ENCODE measurements at regions of chr17 and their contacts with region 1.

Region 1: GRCh38 chr17:55421179-55421934 is at the start of gene MMD:
- DNase-seq: peak; percentile 17
- H3K4me3 ChIP-seq: peak within 1 kb of the TSS; percentile 99
- H3K27ac ChIP-seq: peak within 1 kb of the TSS; percentile 86
- H3K4me1 ChIP-seq: peaks cover 83% of the 10 kb centered on the region
- CTCF ChIP-seq: no peak
- total RNA-seq, gene MMD: 41.4 and 42.7 TPM in 2 replicates

Region 2: GRCh38 chr17:54968262-54968987 is 452.9 kb before region 1 on chr17 and contains the starts of genes COX11 and STXBP4:
- CTCF ChIA-PET with region 1: no interaction called
- POLR2A ChIA-PET with region 1: no interaction called
- intact Hi-C with region 1: loop called (anchors 5 kb)
- DNase-seq: peak; percentile 98
- H3K4me3 ChIP-seq: peak within 1 kb of the TSS; percentile 93
- H3K27ac ChIP-seq: peak within 1 kb of the TSS; percentile 54
- H3K4me1 ChIP-seq: peaks cover 23% of the 10 kb centered on the region
- CTCF ChIP-seq: peak; percentile 59; the same call in 1 of the 2 replicates
- total RNA-seq, gene COX11: 75.6 and 128 TPM in 2 replicates
- total RNA-seq, gene STXBP4: 9.4 and 21.8 TPM in 2 replicates

Region 3: DNA sequence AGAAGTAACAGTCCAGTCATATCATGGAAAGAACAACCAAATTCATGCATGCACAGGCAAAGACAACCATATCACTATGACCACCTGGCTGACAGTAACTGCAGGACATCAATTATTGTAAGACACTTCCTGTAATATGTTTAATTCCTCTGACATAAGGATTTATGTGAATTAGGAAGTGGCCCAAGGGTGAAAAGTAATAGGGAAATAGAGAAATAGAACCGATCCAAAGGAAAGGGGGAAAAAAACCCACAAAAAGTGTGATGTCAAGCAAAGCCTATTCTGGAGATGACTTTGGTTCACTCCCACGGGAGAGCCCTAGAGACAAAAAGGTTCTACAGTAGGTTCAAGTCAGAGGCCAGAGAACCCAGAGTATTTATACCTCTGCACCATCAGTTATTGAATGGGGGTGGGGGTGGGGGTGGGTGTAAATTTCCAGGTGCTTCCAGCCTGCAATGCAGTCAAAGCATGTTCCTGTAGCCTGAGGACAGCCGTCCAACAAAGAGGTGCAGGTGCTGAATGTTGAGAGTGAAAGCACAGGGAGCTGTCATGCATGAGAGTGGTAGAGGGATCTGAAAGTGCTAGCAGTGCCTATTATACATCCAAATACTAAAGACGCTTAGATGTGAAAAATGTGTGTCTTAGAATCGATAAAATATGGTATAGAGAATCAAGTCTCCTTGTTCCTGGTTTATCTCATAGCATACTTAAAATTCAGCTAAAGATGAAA is 252.2 kb before region 1 on chr17:
- CTCF ChIA-PET with region 1: no interaction called
- POLR2A ChIA-PET with region 1: no interaction called
- intact Hi-C with region 1: loop called (anchors 5 kb)
- DNase-seq: peak; percentile 95
- H3K4me3 ChIP-seq: peak overlapping the region; percentile 48
- H3K27ac ChIP-seq: peak overlapping the region; percentile 94
- H3K4me1 ChIP-seq: peaks cover 78% of the 10 kb centered on the region
- CTCF ChIP-seq: no peak

Region 4: DNA sequence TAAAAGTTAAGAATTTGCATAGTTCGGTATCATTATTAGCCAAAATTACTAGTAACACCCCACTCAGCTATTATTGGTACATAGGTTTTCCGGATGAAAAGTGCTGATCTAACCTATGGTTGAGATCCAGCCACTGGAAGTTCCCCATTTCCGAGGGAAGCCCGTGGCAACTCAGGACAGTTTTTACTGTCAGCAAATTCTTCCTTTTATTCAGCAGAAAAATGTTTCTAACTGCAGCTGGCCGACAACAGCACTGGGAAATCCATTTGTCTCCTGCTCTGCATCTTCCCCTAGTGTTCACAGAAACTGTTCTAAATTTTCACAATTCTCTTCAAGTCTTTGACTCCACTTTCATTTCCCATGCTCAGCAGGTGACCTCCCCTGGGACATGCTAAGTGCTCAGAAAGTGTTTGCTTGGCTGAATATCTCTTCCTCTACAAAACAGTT is 15.8 kb after region 1 on chr17:
- CTCF ChIA-PET with region 1: no interaction called
- POLR2A ChIA-PET with region 1: interaction called, 17 read pairs
- intact Hi-C with region 1: loop called (anchors 1 kb)
- DNase-seq: peak; percentile 97
- H3K4me3 ChIP-seq: peak overlapping the region; percentile 58
- H3K27ac ChIP-seq: peak overlapping the region; percentile 93
- H3K4me1 ChIP-seq: peaks cover 65% of the 10 kb centered on the region
- CTCF ChIP-seq: no peak

Region 5: GRCh38 chr17:55513885-55514591 is 92.7 kb after region 1 on chr17:
- CTCF ChIA-PET with region 1: no interaction called
- POLR2A ChIA-PET with region 1: interaction called, 3 read pairs
- intact Hi-C with region 1: loop called (anchors 1 kb)
- DNase-seq: peak; percentile 83
- H3K4me3 ChIP-seq: no peak overlapping the region
- H3K27ac ChIP-seq: no peak overlapping the region
- H3K4me1 ChIP-seq: peaks cover 18% of the 10 kb centered on the region
- CTCF ChIP-seq: peak; percentile 99

Region 6: GRCh38 chr17:55743103-55743679 is 321.8 kb after region 1 on chr17:
- CTCF ChIA-PET with region 1: no interaction called
- POLR2A ChIA-PET with region 1: interaction called, 4 read pairs
- intact Hi-C with region 1: loop called (anchors 10 kb)
- DNase-seq: no peak
- H3K4me3 ChIP-seq: peak overlapping the region; percentile 56
- H3K27ac ChIP-seq: no peak overlapping the region
- H3K4me1 ChIP-seq: peaks cover 18% of the 10 kb centered on the region
- CTCF ChIP-seq: no peak

Region 7: DNA sequence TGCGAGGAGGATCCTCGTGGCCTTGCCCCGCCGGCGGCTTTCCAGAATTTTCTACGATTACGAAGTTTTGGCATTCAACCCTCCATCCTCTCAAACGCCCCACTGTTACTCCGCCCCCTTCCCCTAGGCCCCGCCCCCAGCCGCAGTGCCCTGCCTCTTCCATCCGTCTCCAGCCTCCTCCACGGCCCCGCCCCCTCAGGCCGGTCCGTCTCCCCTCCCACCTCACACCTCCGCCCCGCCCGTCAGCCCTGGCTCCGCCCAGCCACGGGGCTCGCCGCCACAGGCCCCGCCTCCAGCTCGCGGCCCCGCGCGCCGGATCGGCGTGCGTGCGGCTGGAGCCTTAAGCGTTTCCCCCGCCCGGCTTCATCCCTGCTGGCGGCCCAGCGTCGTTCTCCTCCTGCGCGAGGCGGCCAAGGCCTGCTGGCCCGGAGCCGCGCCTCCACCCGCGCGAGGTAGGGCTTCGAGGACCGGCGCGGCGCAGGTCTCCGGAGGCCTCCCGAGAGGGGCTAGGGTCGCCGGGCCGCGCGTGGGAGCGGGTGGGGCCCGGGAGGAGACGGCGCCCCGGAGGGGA is 1412.5 kb after region 1 on chr17 and contains the starts of genes C17orf67 and DGKE:
- CTCF ChIA-PET with region 1: no interaction called
- POLR2A ChIA-PET with region 1: no interaction called
- intact Hi-C with region 1: loop called (anchors 5 kb)
- DNase-seq: peak; percentile 93
- H3K4me3 ChIP-seq: peak within 1 kb of the TSS; percentile 77
- H3K27ac ChIP-seq: peak within 1 kb of the TSS; percentile 52
- H3K4me1 ChIP-seq: peaks cover 59% of the 10 kb centered on the region
- CTCF ChIP-seq: no peak
- total RNA-seq, gene C17orf67: 5.2 and 5.8 TPM in 2 replicates
- total RNA-seq, gene DGKE: 6.2 and 8.6 TPM in 2 replicates

Measured in OCI-LY7 (cell line).